Pancreas (tissue), 10 donors: ENCODE measurements at regions of chr15 and their contacts with region 1.

Region 1: DNA sequence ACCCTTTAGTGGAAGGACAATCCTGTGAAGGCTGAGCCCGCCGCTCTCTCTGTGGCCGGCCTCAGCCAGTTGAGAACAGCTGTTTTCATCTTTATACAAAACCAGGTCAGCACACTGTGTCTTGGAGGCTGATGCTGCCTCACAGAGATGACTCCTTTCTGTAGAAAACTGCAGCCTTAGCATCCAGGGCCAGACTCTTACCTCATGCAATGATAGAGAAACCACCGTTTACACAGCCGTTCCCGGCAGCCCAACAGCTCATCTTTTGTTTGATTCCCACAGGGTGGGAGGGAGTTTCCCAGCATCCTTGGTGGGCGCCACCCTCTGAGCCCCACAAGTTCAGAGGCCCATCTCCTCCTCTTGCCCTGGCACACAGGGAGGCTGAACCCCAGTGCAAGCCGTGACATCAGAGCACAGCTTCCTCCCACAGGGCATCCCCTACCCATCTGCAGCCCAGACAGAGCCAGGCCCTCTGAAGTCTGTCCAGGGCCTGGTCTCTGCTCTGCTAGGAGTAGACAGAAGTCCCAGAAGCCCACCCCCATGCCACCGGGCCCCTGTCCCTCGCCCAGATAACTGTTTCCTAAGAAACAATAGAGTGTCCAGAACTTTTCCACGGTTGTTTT is 105.0 kb downstream of the LRRK1 start:
- DNase-seq: peak in 1 of 6 donors; percentile 43
- ATAC-seq: peak in 3 of 4 donors; percentile 43 to 69 (median 63)
- H3K4me3 ChIP-seq: no peak overlapping the region
- H3K27ac ChIP-seq: peak overlapping the region in 1 of 4 donors; percentile 44
- H3K4me1 ChIP-seq: no peaks in the 10 kb centered on the region
- H3K27me3 ChIP-seq: no peaks in the 10 kb centered on the region
- CTCF ChIP-seq: no peak

Region 2: DNA sequence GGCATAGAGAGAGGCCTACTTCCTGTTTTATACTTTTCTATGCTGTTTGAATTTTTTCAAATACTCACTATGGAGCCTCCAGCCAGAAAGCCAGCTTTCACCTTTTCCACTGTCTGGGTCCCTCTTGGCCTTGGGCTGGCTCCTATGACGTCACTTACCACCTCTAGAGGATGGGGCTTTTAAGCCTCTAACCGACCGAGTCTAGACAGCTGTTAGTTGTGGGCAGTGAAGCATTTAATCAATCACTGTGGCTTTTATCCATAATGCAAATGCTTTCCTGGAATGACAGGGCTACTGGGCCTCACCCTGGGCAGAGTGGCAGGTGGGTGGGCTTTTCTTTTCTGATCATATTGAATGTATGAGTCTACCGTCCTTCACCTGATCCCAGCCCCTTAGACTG is 43.1 kb before region 1 on chr15:
- intact Hi-C with region 1: no loop called
- DNase-seq: no peak
- ATAC-seq: no peak
- H3K4me3 ChIP-seq: no peak overlapping the region
- H3K27ac ChIP-seq: no peak overlapping the region
- H3K4me1 ChIP-seq: peaks cover 2 to 6% (median 4%) of the 10 kb centered on the region in 3 donors
- H3K27me3 ChIP-seq: no peaks in the 10 kb centered on the region
- CTCF ChIP-seq: no peak

Region 3: GRCh38 chr15:101068961-101069653 is 44.9 kb after region 1 on chr15:
- intact Hi-C with region 1: loop called in 1 of 3 experiments (anchors 5 kb)
- DNase-seq: peak in 1 of 6 donors; percentile 28
- ATAC-seq: peak in 1 of 4 donors; percentile 22
- H3K4me3 ChIP-seq: no peak overlapping the region
- H3K27ac ChIP-seq: no peak overlapping the region
- H3K4me1 ChIP-seq: no peaks in the 10 kb centered on the region
- H3K27me3 ChIP-seq: no peaks in the 10 kb centered on the region
- CTCF ChIP-seq: no peak

Region 4: GRCh38 chr15:101348643-101349548 is 324.7 kb after region 1 on chr15:
- intact Hi-C with region 1: no loop called
- DNase-seq: peak in 3 of 6 donors; percentile 36 to 49 (median 39)
- ATAC-seq: peak; percentile 82 to 94 (median 89)
- H3K4me3 ChIP-seq: no peak overlapping the region
- H3K27ac ChIP-seq: peak overlapping the region in 3 of 4 donors; percentile 1 to 24 (median 5)
- H3K4me1 ChIP-seq: peaks cover 6 to 12% (median 9%) of the 10 kb centered on the region in 3 donors
- H3K27me3 ChIP-seq: no peaks in the 10 kb centered on the region
- CTCF ChIP-seq: no peak